Caco-2 (cell line): ENCODE measurements at regions of chr1 and their contacts with region 1.

Region 1: GRCh38 chr1:9181176-9181906 is 52.4 kb upstream of the GPR157 start:
- DNase-seq: peak; percentile 64 to 87
- H3K4me3 ChIP-seq: peak overlapping the region; percentile 75
- H3K4me3 Mint-ChIP-seq: peak overlapping the region; percentile 87
- H3K27ac Mint-ChIP-seq: peak overlapping the region; percentile 72
- H3K4me1 ChIP-seq: peaks cover 15% of the 10 kb centered on the region; the same call in 1 of the 2 replicates
- H3K4me1 Mint-ChIP-seq: peaks cover 5% of the 10 kb centered on the region
- H3K27me3 ChIP-seq: no peaks in the 10 kb centered on the region
- H3K27me3 Mint-ChIP-seq: no peaks in the 10 kb centered on the region
- CTCF ChIP-seq: peak; percentile 86 to 95

Region 2: GRCh38 chr1:9052272-9053049 is 128.9 kb before region 1 on chr1:
- CTCF ChIA-PET with region 1: no interaction called
- POLR2A ChIA-PET with region 1: no interaction called
- intact Hi-C with region 1: no loop called
- DNase-seq: no peak
- H3K4me3 ChIP-seq: no peak overlapping the region
- H3K4me3 Mint-ChIP-seq: no peak overlapping the region
- H3K27ac Mint-ChIP-seq: no peak overlapping the region
- H3K4me1 ChIP-seq: no peaks in the 10 kb centered on the region
- H3K4me1 Mint-ChIP-seq: no peaks in the 10 kb centered on the region
- H3K27me3 ChIP-seq: no peaks in the 10 kb centered on the region
- H3K27me3 Mint-ChIP-seq: no peaks in the 10 kb centered on the region
- CTCF ChIP-seq: no peak

Region 3: GRCh38 chr1:9145021-9145668 is 36.2 kb before region 1 on chr1:
- CTCF ChIA-PET with region 1: interaction called, 3 read pairs
- POLR2A ChIA-PET with region 1: no interaction called
- intact Hi-C with region 1: loop called (anchors 1 kb)
- DNase-seq: no peak
- H3K4me3 ChIP-seq: no peak overlapping the region
- H3K4me3 Mint-ChIP-seq: no peak overlapping the region
- H3K27ac Mint-ChIP-seq: no peak overlapping the region
- H3K4me1 ChIP-seq: no peaks in the 10 kb centered on the region
- H3K4me1 Mint-ChIP-seq: no peaks in the 10 kb centered on the region
- H3K27me3 ChIP-seq: no peaks in the 10 kb centered on the region
- H3K27me3 Mint-ChIP-seq: no peaks in the 10 kb centered on the region
- CTCF ChIP-seq: no peak